CD4-positive, alpha-beta memory T cell (primary cell): ENCODE measurements at regions of chr15 and their contacts with region 1.

Region 1: DNA sequence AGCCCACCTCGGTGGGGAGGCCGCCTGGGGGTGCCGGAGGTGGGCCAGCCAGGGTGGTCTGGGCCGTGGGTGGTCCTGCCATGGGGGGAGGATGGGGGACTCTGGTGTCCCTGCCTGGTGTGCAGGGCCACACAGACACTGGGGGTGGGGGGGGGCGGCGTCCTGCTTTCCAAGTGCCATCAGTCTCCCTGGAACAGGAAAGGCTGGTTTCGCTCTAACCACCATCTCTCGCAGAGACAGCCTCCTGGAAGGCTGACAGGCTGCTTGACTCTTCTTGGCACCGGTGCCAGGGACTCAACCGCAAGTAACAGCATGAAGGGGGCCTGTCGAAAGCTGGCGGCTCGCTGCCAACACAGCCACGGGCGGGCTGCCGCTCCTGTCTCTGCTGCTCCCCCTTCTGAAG is 40.3 kb downstream of the RGMA start:
- DNase-seq: no peak
- H3K4me3 ChIP-seq: no peak overlapping the region
- H3K4me3 Mint-ChIP-seq: peak overlapping the region in 2 of 8 donors; percentile 12 to 15
- H3K27ac ChIP-seq: no peak overlapping the region
- H3K27ac Mint-ChIP-seq: peak overlapping the region in 3 of 7 donors; percentile 8 to 54 (median 50)
- H3K4me1 ChIP-seq: peaks cover 21% of the 10 kb centered on the region
- H3K4me1 Mint-ChIP-seq: peaks cover 10 to 43% (median 26%) of the 10 kb centered on the region in 4 donors
- H3K27me3 ChIP-seq: no peaks in the 10 kb centered on the region
- H3K27me3 Mint-ChIP-seq: peaks cover 1 to 2% of the 10 kb centered on the region in 2 donors

Region 2: GRCh38 chr15:93030430-93031105 is 18.2 kb before region 1 on chr15:
- CTCF ChIA-PET with region 1: interaction called, 26 read pairs
- POLR2A ChIA-PET with region 1: interaction called, 16 read pairs
- intact Hi-C with region 1: no loop called
- DNase-seq: peak in 4 of 5 donors; percentile 57 to 71 (median 63)
- H3K4me3 ChIP-seq: no peak overlapping the region
- H3K4me3 Mint-ChIP-seq: peak overlapping the region in 1 of 8 donors; percentile 27
- H3K27ac ChIP-seq: no peak overlapping the region
- H3K27ac Mint-ChIP-seq: peak overlapping the region; percentile 17 to 85 (median 66)
- H3K4me1 ChIP-seq: peaks cover 22% of the 10 kb centered on the region
- H3K4me1 Mint-ChIP-seq: peaks cover 14 to 29% (median 19%) of the 10 kb centered on the region in 4 donors
- H3K27me3 ChIP-seq: no peaks in the 10 kb centered on the region
- H3K27me3 Mint-ChIP-seq: no peaks in the 10 kb centered on the region

Region 3: GRCh38 chr15:93035953-93036800 is 12.6 kb before region 1 on chr15:
- CTCF ChIA-PET with region 1: interaction called, 26 read pairs
- POLR2A ChIA-PET with region 1: interaction called, 16 read pairs
- intact Hi-C with region 1: no loop called
- DNase-seq: peak in 4 of 5 donors; percentile 19 to 43 (median 36)
- H3K4me3 ChIP-seq: no peak overlapping the region
- H3K4me3 Mint-ChIP-seq: peak overlapping the region in 6 of 8 donors; percentile 42 to 84 (median 78)
- H3K27ac ChIP-seq: no peak overlapping the region
- H3K27ac Mint-ChIP-seq: peak overlapping the region in 5 of 7 donors; percentile 51 to 92 (median 80)
- H3K4me1 ChIP-seq: peaks cover 8% of the 10 kb centered on the region
- H3K4me1 Mint-ChIP-seq: peaks cover 5 to 13% (median 6%) of the 10 kb centered on the region in 4 donors
- H3K27me3 ChIP-seq: no peaks in the 10 kb centered on the region
- H3K27me3 Mint-ChIP-seq: no peaks in the 10 kb centered on the region

Region 4: DNA sequence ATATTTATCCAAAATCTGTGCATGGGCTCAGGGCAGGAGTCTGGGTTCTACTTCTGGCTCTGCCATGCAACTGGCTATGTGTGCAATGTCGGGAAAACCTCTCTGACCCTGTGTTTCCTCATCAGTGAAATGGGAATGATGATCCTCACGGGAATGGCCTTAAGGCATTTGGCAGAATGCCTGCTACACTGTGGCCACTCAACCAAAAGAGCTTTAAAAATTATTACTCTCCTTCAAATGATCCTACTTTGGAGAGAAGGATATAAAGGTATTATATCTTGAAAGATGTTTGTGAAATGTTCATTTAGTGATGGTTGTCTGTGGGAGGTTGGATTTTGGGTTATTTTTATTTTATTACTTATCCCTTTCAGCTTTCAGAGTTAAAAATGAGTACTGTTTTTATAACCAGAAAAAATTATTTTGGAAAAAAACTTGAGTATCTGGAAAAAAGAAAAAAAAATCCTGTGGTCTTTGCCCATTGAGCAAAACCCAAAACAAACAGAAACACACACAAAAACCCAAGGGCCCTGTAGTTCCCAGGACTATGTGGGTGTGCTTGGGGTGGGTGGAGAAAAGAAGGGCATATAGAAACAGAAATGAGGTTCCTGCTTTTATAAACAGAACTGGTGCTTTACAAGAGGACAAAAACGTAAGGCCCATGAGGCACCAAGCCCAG is 18.2 kb after region 1 on chr15:
- CTCF ChIA-PET with region 1: no interaction called
- POLR2A ChIA-PET with region 1: no interaction called
- intact Hi-C with region 1: no loop called
- DNase-seq: no peak
- H3K4me3 ChIP-seq: no peak overlapping the region
- H3K4me3 Mint-ChIP-seq: no peak overlapping the region
- H3K27ac ChIP-seq: no peak overlapping the region
- H3K27ac Mint-ChIP-seq: no peak overlapping the region
- H3K4me1 ChIP-seq: peaks cover 2% of the 10 kb centered on the region
- H3K4me1 Mint-ChIP-seq: peaks cover under 1 to 7% (median 4%) of the 10 kb centered on the region in 4 donors
- H3K27me3 ChIP-seq: peaks cover 2% of the 10 kb centered on the region
- H3K27me3 Mint-ChIP-seq: peaks cover 14 to 21% of the 10 kb centered on the region in 2 donors

Region 5: DNA sequence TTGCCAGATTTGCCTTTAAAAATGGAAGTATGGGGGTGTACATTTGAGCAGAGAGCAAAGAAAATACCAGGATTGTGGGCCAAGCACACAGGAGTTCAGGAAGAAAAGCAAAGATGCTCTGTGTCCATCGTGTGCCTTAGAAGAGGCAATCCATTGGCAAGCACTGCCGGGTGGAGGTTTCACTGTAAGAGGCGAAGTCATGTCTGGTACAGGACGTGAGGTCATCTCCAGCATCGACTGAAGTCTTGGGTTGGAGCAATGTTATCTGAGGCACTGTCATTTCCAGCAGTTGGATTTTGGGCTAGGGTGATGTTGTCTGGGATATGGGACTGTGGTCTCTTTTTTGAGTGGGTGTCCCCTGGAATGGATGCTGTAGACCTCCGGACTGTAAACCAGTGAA is 45.0 kb after region 1 on chr15:
- CTCF ChIA-PET with region 1: no interaction called
- POLR2A ChIA-PET with region 1: no interaction called
- intact Hi-C with region 1: no loop called
- DNase-seq: no peak
- H3K4me3 ChIP-seq: no peak overlapping the region
- H3K4me3 Mint-ChIP-seq: no peak overlapping the region
- H3K27ac ChIP-seq: no peak overlapping the region
- H3K27ac Mint-ChIP-seq: no peak overlapping the region
- H3K4me1 ChIP-seq: peaks cover 4% of the 10 kb centered on the region
- H3K4me1 Mint-ChIP-seq: peaks cover 2 to 10% (median 4%) of the 10 kb centered on the region in 4 donors
- H3K27me3 ChIP-seq: peaks cover 10% of the 10 kb centered on the region
- H3K27me3 Mint-ChIP-seq: peaks cover 13 to 16% of the 10 kb centered on the region in 2 donors